Vagina (tissue), 2 donors: ENCODE measurements at regions of chr10 and their contacts with region 1.

Region 1: GRCh38 chr10:31739711-31740110 is 188.9 kb downstream of the ARHGAP12 start:
- DNase-seq: no peak
- H3K4me3 ChIP-seq: no peak overlapping the region
- H3K27ac ChIP-seq: peak overlapping the region; percentile 34
- H3K4me1 ChIP-seq: no peaks in the 10 kb centered on the region
- H3K27me3 ChIP-seq: no peaks in the 10 kb centered on the region
- CTCF ChIP-seq: no peak
- POLR2A ChIP-seq: no peak

Region 2: GRCh38 chr10:31554556-31554955 is 185.2 kb before region 1 on chr10:
- intact Hi-C with region 1: no loop called
- DNase-seq: no peak
- H3K4me3 ChIP-seq: no peak overlapping the region
- H3K27ac ChIP-seq: no peak overlapping the region
- H3K4me1 ChIP-seq: no peaks in the 10 kb centered on the region
- H3K27me3 ChIP-seq: no peaks in the 10 kb centered on the region
- CTCF ChIP-seq: no peak
- POLR2A ChIP-seq: no peak

Region 3: DNA sequence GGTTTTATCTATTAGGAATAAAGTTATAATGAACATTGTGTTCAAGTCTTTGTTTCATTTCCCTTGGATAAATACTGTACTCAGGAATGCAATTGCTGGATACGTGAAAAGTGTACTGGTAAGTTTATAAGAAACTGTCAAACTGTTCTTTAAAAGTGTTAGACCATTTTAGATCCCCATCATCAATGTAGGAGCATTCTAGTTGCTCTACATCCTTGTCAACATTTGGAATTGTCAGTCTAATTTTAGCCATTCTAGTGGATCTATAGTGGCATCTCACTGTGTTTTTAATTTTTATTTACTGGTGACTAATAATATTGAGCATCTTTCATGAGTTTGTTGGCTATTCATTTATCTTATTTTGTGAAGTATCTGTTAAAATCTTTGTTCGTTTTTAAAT is 1948.8 kb after region 1 on chr10:
- intact Hi-C with region 1: loop called (anchors 5 kb)
- DNase-seq: no peak
- H3K4me3 ChIP-seq: no peak overlapping the region
- H3K27ac ChIP-seq: no peak overlapping the region
- H3K4me1 ChIP-seq: no peaks in the 10 kb centered on the region
- H3K27me3 ChIP-seq: no peaks in the 10 kb centered on the region
- CTCF ChIP-seq: no peak
- POLR2A ChIP-seq: no peak